ENCODE measurements at regions of chr5 and their contacts with region 1.

Region 1: GRCh38 chr5:140401362-140402257 is at the start of gene ANKHD1:
- DNase-seq: peak; percentile 91 to 99
- H3K4me3 ChIP-seq: peak within 1 kb of the TSS; percentile 94 to 100 (median 97)
- H3K27ac ChIP-seq: peak within 1 kb of the TSS; percentile 92
- H3K4me1 ChIP-seq: peaks cover 0 to 9% (median 5%) of the 10 kb centered on the region in 4 experiments; a peak in 5 of 7 replicates
- H3K27me3 ChIP-seq: no peaks in the 10 kb centered on the region
- CTCF ChIP-seq: no peak
- EP300 ChIP-seq: no peak
- POLR2A ChIP-seq: peak; percentile 29 to 90
- RAD21 ChIP-seq: no peak
- total RNA-seq, gene ANKHD1: 101 and 108 TPM in 2 replicates

Region 2: GRCh38 chr5:140388052-140388451 is 13.6 kb before region 1 on chr5:
- CTCF ChIA-PET with region 1: no interaction called
- POLR2A ChIA-PET with region 1: interaction called, 16 read pairs
- DNase-seq: no peak
- H3K4me3 ChIP-seq: no peak overlapping the region
- H3K27ac ChIP-seq: no peak overlapping the region
- H3K4me1 ChIP-seq: no peaks in the 10 kb centered on the region
- H3K27me3 ChIP-seq: no peaks in the 10 kb centered on the region
- CTCF ChIP-seq: no peak
- EP300 ChIP-seq: no peak
- POLR2A ChIP-seq: no peak
- RAD21 ChIP-seq: no peak

Region 3: DNA sequence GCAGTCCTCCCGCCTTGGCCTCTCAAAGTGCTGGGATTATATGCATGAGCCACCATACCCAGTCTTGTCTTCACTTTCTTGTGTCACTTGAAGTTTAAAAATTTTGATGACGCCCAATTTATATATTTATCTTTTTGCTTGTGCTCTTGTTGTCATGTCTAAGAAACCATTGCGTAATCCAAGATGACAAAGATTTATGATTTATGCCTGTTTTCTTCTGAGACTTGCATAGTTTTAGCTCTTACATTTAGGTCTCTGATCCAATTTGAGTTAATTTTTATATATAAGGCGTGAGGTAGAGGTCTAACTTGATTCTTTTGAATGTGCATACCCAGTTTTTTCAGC is 18.6 kb after region 1 on chr5:
- CTCF ChIA-PET with region 1: interaction called, 4 read pairs
- POLR2A ChIA-PET with region 1: interaction called, 29 read pairs
- DNase-seq: no peak
- H3K4me3 ChIP-seq: no peak overlapping the region
- H3K27ac ChIP-seq: no peak overlapping the region
- H3K4me1 ChIP-seq: 0 out of 7 replicates have a peak, but pooled peaks cover 0 to 2% (median 0%) of the 10 kb centered on the region in 4 experiments
- H3K27me3 ChIP-seq: no peaks in the 10 kb centered on the region
- CTCF ChIP-seq: no peak
- EP300 ChIP-seq: no peak
- POLR2A ChIP-seq: no peak
- RAD21 ChIP-seq: no peak